CD8-positive, alpha-beta T cell (primary cell): ENCODE measurements at regions of chr6 and their contacts with region 1.

Region 1: GRCh38 chr6:130697995-130698535 is 129.1 kb upstream of the SMLR1 start:
- DNase-seq: peak; percentile 12 to 69 (median 45)
- ATAC-seq: peak; percentile 65
- H3K4me3 ChIP-seq: no peak overlapping the region
- H3K4me3 Mint-ChIP-seq: no peak overlapping the region
- H3K27ac ChIP-seq: no peak overlapping the region
- H3K27ac Mint-ChIP-seq: no peak overlapping the region
- H3K4me1 ChIP-seq: peaks cover 9% of the 10 kb centered on the region
- H3K4me1 Mint-ChIP-seq: peaks cover 37% of the 10 kb centered on the region
- H3K27me3 ChIP-seq: no peaks in the 10 kb centered on the region
- H3K27me3 Mint-ChIP-seq: no peaks in the 10 kb centered on the region
- CTCF ChIP-seq: peak; percentile 69

Region 2: DNA sequence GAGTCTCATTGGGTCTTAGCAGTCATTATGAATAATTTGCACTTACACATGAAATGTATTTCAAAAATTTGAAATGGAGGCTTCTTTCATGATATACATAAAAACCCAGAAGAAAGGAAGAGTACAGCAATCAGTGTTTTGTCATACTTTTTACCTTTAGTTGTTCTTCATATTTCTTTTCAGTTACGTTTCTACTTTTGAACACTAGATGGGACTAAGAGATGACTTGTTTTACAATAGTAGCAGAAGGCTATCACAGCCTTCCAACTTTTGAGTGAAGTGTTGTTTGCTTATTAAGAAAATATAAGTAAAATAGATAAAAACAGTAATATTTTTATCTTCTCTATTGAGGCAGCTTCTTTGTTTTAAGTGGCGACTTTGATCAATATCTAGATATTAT is 621.6 kb before region 1 on chr6:
- CTCF ChIA-PET with region 1: no interaction called
- POLR2A ChIA-PET with region 1: no interaction called
- intact Hi-C with region 1: loop called in 1 of 2 experiments (anchors 2 kb)
- DNase-seq: peak in 2 of 9 experiments; percentile 25 to 39
- ATAC-seq: no peak
- H3K4me3 ChIP-seq: no peak overlapping the region
- H3K4me3 Mint-ChIP-seq: no peak overlapping the region
- H3K27ac ChIP-seq: no peak overlapping the region
- H3K27ac Mint-ChIP-seq: no peak overlapping the region
- H3K4me1 ChIP-seq: no peaks in the 10 kb centered on the region
- H3K4me1 Mint-ChIP-seq: peaks cover 18% of the 10 kb centered on the region
- H3K27me3 ChIP-seq: no peaks in the 10 kb centered on the region
- H3K27me3 Mint-ChIP-seq: no peaks in the 10 kb centered on the region
- CTCF ChIP-seq: no peak

Region 3: DNA sequence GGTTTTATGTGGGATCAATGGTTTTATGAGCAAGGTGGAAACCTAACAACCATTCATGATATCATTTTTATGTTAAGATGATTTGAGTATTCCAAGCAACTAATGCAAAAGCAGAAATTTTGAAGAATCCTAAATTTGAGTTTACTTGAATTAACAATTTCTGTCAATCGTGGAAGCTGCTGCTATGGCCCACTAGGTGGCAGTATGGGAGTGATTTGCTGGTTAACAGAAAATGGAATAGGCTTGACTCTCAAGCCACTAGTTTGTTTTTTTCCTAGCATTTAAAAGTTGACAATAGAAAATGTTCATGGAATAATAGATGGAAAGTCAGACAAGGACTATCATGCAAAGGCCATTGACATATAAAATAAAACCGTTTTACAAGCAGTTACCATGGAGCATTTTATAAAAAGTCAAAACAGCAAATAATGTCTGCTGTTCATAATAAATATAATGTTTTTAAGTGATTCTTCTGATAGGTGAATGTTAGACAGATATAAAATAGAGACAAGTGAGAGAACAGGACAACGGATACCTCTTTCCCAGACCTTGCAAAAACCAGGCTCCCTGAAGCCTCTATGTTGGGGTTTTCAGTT is 375.3 kb before region 1 on chr6:
- CTCF ChIA-PET with region 1: interaction called, 58 read pairs
- POLR2A ChIA-PET with region 1: no interaction called
- intact Hi-C with region 1: loop called (anchors 1 kb)
- DNase-seq: peak in 8 of 9 experiments; percentile 31 to 81 (median 58)
- ATAC-seq: peak; percentile 42
- H3K4me3 ChIP-seq: no peak overlapping the region
- H3K4me3 Mint-ChIP-seq: no peak overlapping the region
- H3K27ac ChIP-seq: no peak overlapping the region
- H3K27ac Mint-ChIP-seq: no peak overlapping the region
- H3K4me1 ChIP-seq: no peaks in the 10 kb centered on the region
- H3K4me1 Mint-ChIP-seq: peaks cover 2% of the 10 kb centered on the region
- H3K27me3 ChIP-seq: no peaks in the 10 kb centered on the region
- H3K27me3 Mint-ChIP-seq: no peaks in the 10 kb centered on the region
- CTCF ChIP-seq: peak; percentile 92

Region 4: DNA sequence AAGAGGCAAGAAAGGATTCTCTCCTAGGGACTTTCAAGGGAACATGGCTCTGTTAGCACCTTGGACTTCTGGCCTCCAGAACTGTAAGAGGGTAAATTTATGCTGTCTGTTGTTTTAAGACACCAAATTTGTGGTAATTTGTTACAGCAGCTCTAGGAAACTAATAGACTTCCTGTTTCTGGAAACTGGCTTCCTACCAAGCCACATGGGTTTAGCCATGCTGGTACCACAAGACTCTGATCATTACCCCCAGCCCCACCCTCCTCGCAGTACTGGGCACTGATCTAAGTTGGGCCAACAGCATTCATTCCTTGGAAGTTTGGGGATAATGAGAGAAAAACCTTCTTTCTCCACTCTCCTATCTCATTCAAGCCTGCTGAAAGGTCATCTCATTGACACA is 19.6 kb after region 1 on chr6:
- CTCF ChIA-PET with region 1: interaction called, 13 read pairs
- POLR2A ChIA-PET with region 1: interaction called, 3 read pairs
- intact Hi-C with region 1: no loop called
- DNase-seq: peak in 1 of 9 experiments; percentile 40
- ATAC-seq: no peak
- H3K4me3 ChIP-seq: no peak overlapping the region
- H3K4me3 Mint-ChIP-seq: no peak overlapping the region
- H3K27ac ChIP-seq: peak overlapping the region in 1 of 2 experiments; percentile 6
- H3K27ac Mint-ChIP-seq: no peak overlapping the region
- H3K4me1 ChIP-seq: peaks cover 10% of the 10 kb centered on the region
- H3K4me1 Mint-ChIP-seq: peaks cover 14% of the 10 kb centered on the region
- H3K27me3 ChIP-seq: no peaks in the 10 kb centered on the region
- H3K27me3 Mint-ChIP-seq: no peaks in the 10 kb centered on the region
- CTCF ChIP-seq: no peak